ENCODE measurements at regions of chr10 and their contacts with region 1.

Region 1: GRCh38 chr10:69327463-69328379 is 49.4 kb downstream of the HK1 start:
- DNase-seq: peak; percentile 45
- ATAC-seq: peak; percentile 99
- H3K4me3 Mint-ChIP-seq: peak overlapping the region; percentile 78
- H3K27ac Mint-ChIP-seq: peak overlapping the region; percentile 87
- H3K4me1 Mint-ChIP-seq: peaks cover 36% of the 10 kb centered on the region
- H3K27me3 Mint-ChIP-seq: no peaks in the 10 kb centered on the region
- CTCF ChIP-seq: no peak

Region 2: DNA sequence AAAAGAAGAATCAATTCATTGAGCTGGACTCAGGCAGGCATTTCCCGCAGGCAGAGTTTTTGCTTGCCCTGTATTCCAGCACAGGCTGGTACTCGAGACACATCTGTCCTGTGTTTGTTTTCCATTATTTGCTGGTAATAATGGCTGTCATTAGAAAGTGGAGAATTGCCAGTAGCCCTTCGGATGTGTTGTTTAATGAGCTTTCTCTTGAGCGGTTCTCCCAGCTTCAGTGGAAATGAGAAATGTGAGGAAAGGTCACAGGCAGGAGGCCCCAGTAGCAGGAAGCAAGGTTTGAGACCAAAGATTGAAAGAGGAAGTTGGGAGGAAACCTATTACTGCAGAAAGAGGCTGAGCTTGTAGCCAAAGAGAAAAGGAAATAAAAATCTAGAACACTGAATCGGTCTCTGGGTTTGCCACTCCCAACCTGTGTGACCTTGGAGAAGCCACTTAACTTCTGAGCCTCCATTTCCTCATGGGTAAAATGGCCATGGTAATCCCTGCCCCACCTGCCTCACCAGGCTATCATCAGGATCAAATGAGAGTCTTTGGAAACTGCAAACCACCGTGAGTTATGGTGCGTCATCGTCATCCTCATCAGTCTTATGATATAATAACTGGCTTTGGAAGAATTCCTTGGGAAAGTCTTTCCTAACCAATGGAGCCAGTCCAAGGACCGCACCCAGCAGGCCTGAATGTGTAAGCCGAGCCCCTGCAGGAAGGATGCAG is 21.3 kb after region 1 on chr10:
- CTCF ChIA-PET with region 1: no interaction called
- POLR2A ChIA-PET with region 1: interaction called, 15 read pairs
- intact Hi-C with region 1: loop called (anchors 1 kb)
- DNase-seq: no peak
- ATAC-seq: peak; percentile 28
- H3K4me3 Mint-ChIP-seq: peak overlapping the region; percentile 62
- H3K27ac Mint-ChIP-seq: peak overlapping the region; percentile 81
- H3K4me1 Mint-ChIP-seq: peaks cover 63% of the 10 kb centered on the region
- H3K27me3 Mint-ChIP-seq: no peaks in the 10 kb centered on the region
- CTCF ChIP-seq: no peak

Measured in activated B cell treated with CpG ODN at 0.5 μM for 24 hours (primary cell).